PC-3 (cell line): ENCODE measurements at regions of chr19 and their contacts with region 1.

Region 1: DNA sequence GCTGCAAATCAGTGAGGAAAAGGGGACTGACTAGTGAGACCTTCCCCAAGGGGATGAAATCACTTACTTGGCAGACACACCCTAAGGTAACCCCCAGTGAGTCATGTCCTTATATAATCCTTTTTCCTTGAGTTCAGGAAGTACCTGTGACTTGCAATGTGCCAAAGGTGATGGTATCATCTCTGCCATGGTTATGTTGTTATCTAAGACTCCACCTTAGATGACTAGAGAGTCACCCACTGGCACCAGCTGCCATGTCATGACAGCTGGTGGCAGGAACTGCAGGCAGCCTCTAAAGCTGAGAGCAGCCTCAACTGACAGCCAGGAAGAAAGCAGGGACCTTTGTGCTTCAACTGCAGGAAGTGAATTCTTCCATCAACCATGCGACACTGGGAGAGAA is 12.5 kb downstream of the PBX4 start:
- DNase-seq: peak; percentile 95
- ATAC-seq: peak; percentile 97
- H3K4me3 ChIP-seq: no peak overlapping the region
- H3K27ac ChIP-seq: peak overlapping the region; percentile 85
- H3K4me1 ChIP-seq: peaks cover 14% of the 10 kb centered on the region
- H3K27me3 ChIP-seq: no peaks in the 10 kb centered on the region
- CTCF ChIP-seq: no peak

Region 2: GRCh38 chr19:19628501-19629175 is 22.6 kb after region 1 on chr19:
- CTCF ChIA-PET with region 1: no interaction called
- POLR2A ChIA-PET with region 1: interaction called, 16 read pairs
- intact Hi-C with region 1: no loop called
- DNase-seq: peak; percentile 84
- ATAC-seq: peak; percentile 73
- H3K4me3 ChIP-seq: peak overlapping the region; percentile 84
- H3K27ac ChIP-seq: peak overlapping the region; percentile 83
- H3K4me1 ChIP-seq: peaks cover 13% of the 10 kb centered on the region
- H3K27me3 ChIP-seq: no peaks in the 10 kb centered on the region
- CTCF ChIP-seq: no peak

Region 3: DNA sequence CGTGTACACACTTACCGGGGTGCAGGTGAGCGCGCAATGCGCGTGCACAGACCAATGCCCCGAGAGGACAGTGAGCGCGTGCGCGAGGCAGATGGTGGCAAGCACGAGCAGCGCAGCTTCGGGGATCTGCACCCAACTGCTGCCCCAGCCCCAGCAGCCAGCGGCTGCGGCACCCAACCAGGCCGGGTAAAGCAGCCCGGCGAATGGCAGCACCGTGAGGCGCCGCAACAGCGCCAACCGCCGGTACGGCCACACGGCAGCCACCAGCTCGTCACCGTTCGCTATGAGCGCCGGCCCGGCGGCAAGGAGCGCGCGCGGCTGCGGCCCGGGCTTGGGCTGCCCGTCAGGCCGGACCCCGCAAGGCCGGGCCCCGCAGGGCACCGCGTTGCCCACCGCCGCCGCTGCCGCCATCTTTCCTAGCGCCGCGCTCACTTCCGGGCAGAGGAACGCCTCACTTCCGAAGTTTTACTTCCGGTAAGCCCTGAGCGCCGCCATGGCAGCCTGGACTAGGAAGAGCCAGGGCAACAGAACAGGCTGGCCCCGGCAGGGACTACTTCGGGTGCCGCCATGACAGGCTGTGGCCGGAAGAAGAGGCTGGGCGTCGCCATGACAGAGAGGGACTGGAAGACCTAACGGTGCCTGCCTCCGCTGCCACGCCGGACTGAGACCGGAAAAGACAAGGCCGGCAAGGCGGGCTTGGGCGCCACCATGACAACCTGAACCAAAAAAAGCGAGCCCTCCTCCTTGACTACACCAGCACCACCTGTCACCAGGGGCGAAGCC is 57.4 kb after region 1 on chr19 and contains the start of gene ATP13A1:
- CTCF ChIA-PET with region 1: no interaction called
- POLR2A ChIA-PET with region 1: no interaction called
- intact Hi-C with region 1: no loop called
- DNase-seq: peak; percentile 94
- ATAC-seq: peak; percentile 86
- H3K4me3 ChIP-seq: peak within 1 kb of the TSS; percentile 94
- H3K27ac ChIP-seq: peak within 1 kb of the TSS; percentile 71
- H3K4me1 ChIP-seq: peaks cover 11% of the 10 kb centered on the region
- H3K27me3 ChIP-seq: no peaks in the 10 kb centered on the region
- CTCF ChIP-seq: no peak
- total RNA-seq, gene ATP13A1: 48.5 and 58.2 TPM in 2 replicates

Region 4: DNA sequence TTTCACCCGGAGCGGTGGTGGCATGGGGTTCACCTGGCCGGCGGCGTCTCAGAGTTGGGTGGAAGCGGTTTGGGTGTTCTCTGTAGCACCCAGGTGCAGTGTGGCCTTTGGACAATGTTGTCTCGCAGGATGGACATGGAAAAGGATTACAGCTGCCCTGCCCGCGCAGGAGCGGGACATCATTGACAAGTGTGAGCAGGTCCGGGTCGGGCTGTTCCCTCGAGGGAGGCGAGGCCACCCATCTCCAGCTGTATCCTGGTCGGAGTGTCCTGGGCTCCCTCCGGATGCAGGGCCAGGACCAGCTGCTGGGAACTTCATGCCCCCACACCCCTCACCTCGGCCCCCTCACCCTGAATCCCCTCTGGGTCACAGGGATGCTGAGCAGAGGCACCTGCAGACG is 134.7 kb after region 1 on chr19:
- CTCF ChIA-PET with region 1: no interaction called
- POLR2A ChIA-PET with region 1: no interaction called
- intact Hi-C with region 1: no loop called
- DNase-seq: no peak
- ATAC-seq: no peak
- H3K4me3 ChIP-seq: no peak overlapping the region
- H3K27ac ChIP-seq: no peak overlapping the region
- H3K4me1 ChIP-seq: no peaks in the 10 kb centered on the region
- H3K27me3 ChIP-seq: no peaks in the 10 kb centered on the region
- CTCF ChIP-seq: no peak